CD8-positive, alpha-beta T cell (primary cell): ENCODE measurements at regions of chr16 and their contacts with region 1.

Region 1: GRCh38 chr16:48284772-48285409 is 37.6 kb upstream of the ABCC11 start:
- DNase-seq: peak in 2 of 9 experiments; percentile 35 to 51
- ATAC-seq: no peak
- H3K4me3 ChIP-seq: no peak overlapping the region
- H3K4me3 Mint-ChIP-seq: peak overlapping the region; percentile 20
- H3K27ac ChIP-seq: no peak overlapping the region
- H3K27ac Mint-ChIP-seq: peak overlapping the region; percentile 64
- H3K4me1 ChIP-seq: no peaks in the 10 kb centered on the region
- H3K4me1 Mint-ChIP-seq: peaks cover 24% of the 10 kb centered on the region
- H3K27me3 ChIP-seq: no peaks in the 10 kb centered on the region
- H3K27me3 Mint-ChIP-seq: no peaks in the 10 kb centered on the region
- CTCF ChIP-seq: no peak

Region 2: DNA sequence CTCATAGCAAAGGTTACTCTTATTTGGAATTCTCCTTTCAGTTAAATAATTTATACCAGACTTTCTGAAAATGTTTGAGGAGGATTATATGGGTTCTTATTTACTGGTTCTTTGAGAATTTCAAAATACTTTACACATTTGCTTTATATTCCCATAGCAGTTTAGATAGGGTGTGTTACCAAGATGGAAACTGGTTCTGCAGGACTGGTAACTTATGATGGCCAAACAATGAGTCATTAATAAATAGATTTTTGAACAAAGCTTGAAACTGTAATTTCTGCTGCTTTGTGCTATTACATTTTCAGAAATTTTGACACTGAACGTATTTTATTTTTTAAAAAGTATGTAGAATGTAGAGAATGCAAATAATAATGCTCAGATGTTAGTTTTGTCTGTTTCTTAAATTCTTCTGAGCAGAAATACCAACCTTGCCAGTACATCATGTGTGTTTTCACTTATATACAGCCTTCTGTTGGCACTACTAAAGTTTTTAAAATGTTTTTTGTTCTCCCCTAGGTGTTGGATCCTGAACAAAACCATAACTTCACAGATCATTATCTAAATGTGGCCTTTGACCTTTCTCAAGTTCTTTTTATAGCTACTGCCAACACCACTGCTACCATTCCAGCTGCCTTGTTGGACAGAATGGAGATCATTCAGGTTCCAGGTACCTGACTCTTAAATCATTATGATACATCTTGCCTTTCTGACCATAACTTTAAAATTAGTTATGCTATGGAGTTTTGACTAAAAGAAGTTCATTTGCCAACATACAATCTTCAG is 10.8 kb after region 1 on chr16:
- CTCF ChIA-PET with region 1: no interaction called
- POLR2A ChIA-PET with region 1: no interaction called
- intact Hi-C with region 1: no loop called
- DNase-seq: no peak
- ATAC-seq: no peak
- H3K4me3 ChIP-seq: no peak overlapping the region
- H3K4me3 Mint-ChIP-seq: no peak overlapping the region
- H3K27ac ChIP-seq: no peak overlapping the region
- H3K27ac Mint-ChIP-seq: no peak overlapping the region
- H3K4me1 ChIP-seq: no peaks in the 10 kb centered on the region
- H3K4me1 Mint-ChIP-seq: peaks cover 11% of the 10 kb centered on the region
- H3K27me3 ChIP-seq: no peaks in the 10 kb centered on the region
- H3K27me3 Mint-ChIP-seq: no peaks in the 10 kb centered on the region
- CTCF ChIP-seq: no peak

Region 3: DNA sequence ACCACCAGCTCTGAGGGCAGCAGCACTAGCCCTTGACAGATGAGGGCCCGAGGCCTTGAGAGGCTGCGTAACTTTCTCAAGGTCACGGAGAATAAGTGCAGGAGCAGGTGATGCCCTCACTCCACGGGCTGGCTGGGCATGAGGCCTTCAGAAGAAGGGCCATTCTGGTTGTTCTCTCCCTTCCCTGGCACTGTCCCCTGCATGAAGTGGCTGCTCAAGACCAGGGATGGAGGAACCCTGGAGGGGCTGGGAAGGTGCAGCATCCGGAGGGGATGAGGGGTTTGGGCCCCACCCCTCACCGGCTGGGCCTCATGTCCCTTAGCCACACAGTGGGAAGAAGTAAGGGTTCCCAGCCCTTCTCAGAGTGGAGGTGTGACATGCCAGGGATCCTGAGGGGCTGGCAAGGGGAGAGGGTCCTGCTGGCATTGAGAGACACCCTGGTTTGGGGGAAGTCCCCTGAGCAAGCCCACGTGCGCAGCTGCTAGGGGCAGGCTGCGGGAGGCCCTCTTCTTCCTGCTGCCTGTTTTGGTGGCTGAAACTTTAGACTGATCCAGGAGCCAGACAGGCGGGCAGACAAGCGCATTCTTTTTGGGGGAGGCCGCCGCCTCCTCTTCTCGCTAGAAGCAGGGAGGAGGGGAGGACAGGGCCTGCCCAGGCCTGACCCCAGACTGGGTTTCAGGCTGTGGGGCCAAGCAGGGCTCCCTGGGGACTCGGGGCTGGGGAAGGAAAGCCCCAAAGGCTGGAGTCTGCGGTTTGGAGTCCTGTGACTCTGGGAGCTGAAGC is 251.1 kb after region 1 on chr16:
- CTCF ChIA-PET with region 1: no interaction called
- POLR2A ChIA-PET with region 1: no interaction called
- intact Hi-C with region 1: loop called in 1 of 2 experiments (anchors 10 kb)
- DNase-seq: peak in 3 of 9 experiments; percentile 32 to 49 (median 48)
- ATAC-seq: peak; percentile 24
- H3K4me3 ChIP-seq: no peak overlapping the region
- H3K4me3 Mint-ChIP-seq: no peak overlapping the region
- H3K27ac ChIP-seq: no peak overlapping the region
- H3K27ac Mint-ChIP-seq: no peak overlapping the region
- H3K4me1 ChIP-seq: peaks cover 22% of the 10 kb centered on the region
- H3K4me1 Mint-ChIP-seq: peaks cover 20% of the 10 kb centered on the region
- H3K27me3 ChIP-seq: no peaks in the 10 kb centered on the region
- H3K27me3 Mint-ChIP-seq: no peaks in the 10 kb centered on the region
- CTCF ChIP-seq: no peak